ENCODE measurements at regions of chr2 and their contacts with region 1.

Region 1: GRCh38 chr2:96509114-96509846 is 4.1 kb upstream of the NEURL3 start:
- DNase-seq: peak; percentile 82 to 94
- H3K4me3 ChIP-seq: no peak overlapping the region
- H3K27ac ChIP-seq: no peak overlapping the region
- H3K4me1 ChIP-seq: peaks cover 40% of the 10 kb centered on the region
- H3K27me3 ChIP-seq: no peaks in the 10 kb centered on the region
- CTCF ChIP-seq: peak; percentile 100

Region 2: DNA sequence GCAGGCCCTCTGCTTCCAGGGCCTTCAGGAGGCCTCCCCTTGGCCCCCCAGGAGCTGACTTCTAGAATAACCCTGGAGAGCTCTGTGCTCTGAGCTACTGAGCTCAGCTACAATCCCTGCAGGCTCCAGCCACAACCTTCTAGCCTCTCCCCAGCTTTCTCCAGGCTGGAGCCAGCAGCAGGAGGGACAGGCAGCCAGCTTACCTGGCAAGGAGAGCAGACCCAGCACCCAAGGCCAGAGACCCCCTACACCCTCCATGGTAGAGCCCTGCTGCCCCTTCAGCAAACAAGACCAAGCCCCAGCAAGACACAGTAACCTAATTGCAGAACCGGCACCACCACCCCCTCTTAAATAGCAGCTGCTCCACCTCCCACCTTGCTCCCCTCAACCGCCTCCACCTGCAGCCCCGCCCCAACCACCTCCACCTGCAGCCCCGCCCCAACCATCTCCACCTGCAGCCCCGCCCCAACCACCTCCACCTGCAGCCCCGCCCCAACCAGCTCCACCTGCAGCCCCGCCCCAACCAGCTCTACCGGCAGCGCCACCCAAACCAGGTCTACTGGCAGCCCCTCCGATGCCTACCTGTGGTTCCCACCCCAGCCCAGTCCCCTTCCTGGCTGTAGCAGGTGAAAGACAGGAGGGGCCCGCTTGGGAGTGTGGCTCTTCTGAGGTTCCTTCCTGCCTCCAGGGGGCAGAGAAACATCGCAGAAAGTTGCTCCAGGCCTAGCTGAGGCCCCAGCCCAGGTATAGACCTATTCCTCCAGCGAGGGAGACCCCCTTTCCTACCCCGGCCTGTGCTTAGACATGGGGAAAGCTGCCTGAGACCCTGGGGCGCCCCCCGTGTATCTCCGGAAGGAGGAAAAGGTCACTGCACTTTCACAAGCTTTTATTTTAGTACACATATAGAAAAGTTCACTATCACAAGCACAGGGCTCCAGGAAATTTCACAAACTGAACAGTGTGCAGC is 370.8 kb before region 1 on chr2 and contains the start of gene ASTL:
- CTCF ChIA-PET with region 1: no interaction called
- POLR2A ChIA-PET with region 1: no interaction called
- intact Hi-C with region 1: loop called (anchors 2 kb)
- DNase-seq: peak; percentile 80 to 89
- H3K4me3 ChIP-seq: peak within 1 kb of the TSS; percentile 22; the same call in 1 of the 2 replicates
- H3K27ac ChIP-seq: no peak within 1 kb of the TSS
- H3K4me1 ChIP-seq: peaks cover 9% of the 10 kb centered on the region
- H3K27me3 ChIP-seq: no peaks in the 10 kb centered on the region
- CTCF ChIP-seq: peak; percentile 71
- total RNA-seq, gene ASTL: not detected in 2 replicates

Region 3: DNA sequence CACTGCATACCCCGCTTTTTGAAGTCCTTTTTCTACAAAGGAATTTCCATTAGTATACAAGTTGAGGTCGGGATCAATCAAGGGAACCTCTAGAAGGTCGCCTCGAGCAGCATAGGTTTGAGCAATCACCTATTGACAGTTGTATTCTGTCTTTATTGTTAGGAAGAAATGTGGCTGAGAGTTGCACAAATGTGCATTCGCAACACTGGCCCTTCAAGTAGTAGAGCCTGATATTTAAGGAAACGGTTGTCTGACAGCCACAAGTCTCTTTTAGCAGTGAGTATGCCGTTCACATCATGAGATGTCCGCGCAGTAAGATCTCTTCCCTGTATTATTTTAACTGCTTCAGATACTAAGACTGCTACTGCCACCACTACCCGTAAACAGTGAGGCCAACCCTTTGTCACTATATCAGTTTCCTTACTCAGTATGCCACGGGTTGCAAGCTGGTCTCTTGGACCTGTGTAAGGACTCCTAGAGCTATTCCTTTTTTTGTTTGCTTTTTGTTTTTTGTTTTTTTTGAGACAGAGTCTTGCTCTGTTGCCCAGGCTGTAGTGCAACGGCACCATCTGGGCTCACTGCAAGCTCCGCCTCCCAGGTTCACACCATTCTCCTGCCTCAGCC is 290.7 kb before region 1 on chr2:
- CTCF ChIA-PET with region 1: no interaction called
- POLR2A ChIA-PET with region 1: no interaction called
- intact Hi-C with region 1: no loop called
- DNase-seq: no peak
- H3K4me3 ChIP-seq: no peak overlapping the region
- H3K27ac ChIP-seq: no peak overlapping the region
- H3K4me1 ChIP-seq: no peaks in the 10 kb centered on the region
- H3K27me3 ChIP-seq: no peaks in the 10 kb centered on the region
- CTCF ChIP-seq: no peak

Region 4: DNA sequence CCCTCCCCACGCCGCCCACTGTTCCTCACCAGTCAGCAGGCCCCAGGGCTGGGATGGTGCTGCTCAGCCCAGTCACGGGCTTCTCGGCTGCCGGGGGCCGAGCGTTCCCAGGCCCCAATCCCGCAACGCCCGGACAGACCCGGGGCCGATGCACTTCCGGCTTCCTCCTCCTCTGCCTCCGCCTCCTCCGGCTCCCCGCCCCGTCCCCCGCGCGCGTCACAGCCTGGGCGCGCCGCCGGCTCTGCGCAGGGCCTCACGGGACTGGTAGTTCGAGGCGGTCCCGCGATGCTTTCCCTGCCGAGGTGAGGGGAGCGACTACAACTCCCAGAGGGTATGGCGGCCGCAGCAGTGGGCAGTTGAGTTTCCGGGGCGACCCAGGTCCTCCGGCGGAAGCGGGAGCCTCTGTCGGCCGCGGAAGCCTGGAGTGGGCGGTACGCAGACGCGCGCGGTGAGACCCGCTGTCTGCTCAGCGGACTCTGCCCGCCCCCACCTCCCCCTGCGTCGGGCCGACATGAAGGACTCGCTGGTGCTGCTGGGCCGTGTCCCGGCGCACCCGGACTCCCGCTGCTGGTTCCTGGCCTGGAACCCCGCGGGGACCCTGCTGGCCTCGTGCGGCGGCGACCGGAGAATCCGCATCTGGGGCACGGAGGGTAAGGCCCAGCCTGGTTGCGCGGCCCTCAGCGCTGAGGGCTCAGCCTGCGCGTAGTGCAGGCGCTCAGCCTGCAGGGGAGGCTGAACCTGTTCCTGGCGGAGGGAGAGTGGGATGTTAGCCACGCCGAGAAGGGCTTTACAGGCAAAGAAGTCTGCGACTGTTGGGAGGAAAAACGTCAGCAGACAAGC is 243.2 kb before region 1 on chr2 and contains the starts of genes CIAO1 and TMEM127:
- CTCF ChIA-PET with region 1: no interaction called
- POLR2A ChIA-PET with region 1: no interaction called
- intact Hi-C with region 1: loop called (anchors 2 kb)
- DNase-seq: peak; percentile 96 to 99
- H3K4me3 ChIP-seq: peak within 1 kb of the TSS; percentile 92
- H3K27ac ChIP-seq: peak within 1 kb of the TSS; percentile 48
- H3K4me1 ChIP-seq: peaks cover 41% of the 10 kb centered on the region
- H3K27me3 ChIP-seq: no peaks in the 10 kb centered on the region
- CTCF ChIP-seq: peak; percentile 52; the same call in 1 of the 2 replicates
- total RNA-seq, gene CIAO1: 85.3 and 99.5 TPM in 2 replicates
- total RNA-seq, gene TMEM127: 38.4 and 50.3 TPM in 2 replicates

Region 5: GRCh38 chr2:96296925-96297324 is 212.4 kb before region 1 on chr2:
- CTCF ChIA-PET with region 1: no interaction called
- POLR2A ChIA-PET with region 1: no interaction called
- intact Hi-C with region 1: no loop called
- DNase-seq: no peak
- H3K4me3 ChIP-seq: no peak overlapping the region
- H3K27ac ChIP-seq: no peak overlapping the region
- H3K4me1 ChIP-seq: no peaks in the 10 kb centered on the region
- H3K27me3 ChIP-seq: no peaks in the 10 kb centered on the region
- CTCF ChIP-seq: no peak

Region 6: DNA sequence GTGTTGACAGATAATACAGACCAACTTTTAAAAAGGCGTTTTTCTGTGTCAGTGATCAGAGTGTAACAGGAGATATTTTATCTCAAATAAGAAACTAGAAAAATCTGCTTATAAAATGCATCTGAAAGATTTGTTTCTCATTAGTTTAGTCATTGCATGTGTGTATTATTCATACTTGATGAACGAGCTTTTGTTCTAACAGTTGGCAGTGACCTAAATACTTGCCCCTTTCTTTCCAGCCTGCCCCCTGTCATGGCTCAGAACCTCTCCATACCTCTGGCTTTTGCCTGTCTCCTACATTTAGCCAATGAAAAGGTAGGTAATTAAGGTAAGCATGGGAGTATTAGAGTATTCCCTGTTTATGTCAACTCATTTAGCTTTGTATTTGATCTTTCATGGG is 140.1 kb before region 1 on chr2:
- CTCF ChIA-PET with region 1: no interaction called
- POLR2A ChIA-PET with region 1: interaction called, 16 read pairs
- intact Hi-C with region 1: no loop called
- DNase-seq: no peak
- H3K4me3 ChIP-seq: no peak overlapping the region
- H3K27ac ChIP-seq: no peak overlapping the region
- H3K4me1 ChIP-seq: peaks cover 6% of the 10 kb centered on the region
- H3K27me3 ChIP-seq: no peaks in the 10 kb centered on the region
- CTCF ChIP-seq: no peak

Region 7: DNA sequence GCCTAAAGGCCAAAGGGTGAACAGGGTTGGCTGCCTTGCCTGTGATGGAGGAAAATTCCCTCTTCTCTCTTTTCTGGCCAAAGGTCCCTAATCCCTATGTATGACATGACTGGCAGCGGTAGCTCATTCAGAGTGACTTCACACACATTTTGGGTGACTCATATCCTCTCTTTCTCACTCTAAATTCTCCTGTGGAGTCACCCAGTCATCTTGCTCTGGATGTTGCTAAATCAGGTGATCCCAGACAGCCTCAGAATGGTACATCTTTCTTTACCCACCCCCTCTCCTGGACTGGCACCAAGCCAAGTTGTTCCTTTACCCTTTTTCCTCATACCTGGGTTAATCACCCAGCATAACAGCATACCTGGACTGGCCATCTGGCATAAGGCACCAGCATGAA is 81.4 kb before region 1 on chr2:
- CTCF ChIA-PET with region 1: interaction called, 5 read pairs
- POLR2A ChIA-PET with region 1: interaction called, 8 read pairs
- intact Hi-C with region 1: loop called (anchors 1 kb)
- DNase-seq: peak; percentile 96 to 100
- H3K4me3 ChIP-seq: no peak overlapping the region
- H3K27ac ChIP-seq: peak overlapping the region; percentile 82
- H3K4me1 ChIP-seq: peaks cover 32% of the 10 kb centered on the region
- H3K27me3 ChIP-seq: no peaks in the 10 kb centered on the region
- CTCF ChIP-seq: no peak

Region 8: GRCh38 chr2:96554293-96555145 is 45.2 kb after region 1 on chr2:
- CTCF ChIA-PET with region 1: no interaction called
- POLR2A ChIA-PET with region 1: no interaction called
- intact Hi-C with region 1: loop called (anchors 1 kb)
- DNase-seq: peak; percentile 55 to 67
- H3K4me3 ChIP-seq: no peak overlapping the region
- H3K27ac ChIP-seq: no peak overlapping the region
- H3K4me1 ChIP-seq: peaks cover 30% of the 10 kb centered on the region
- H3K27me3 ChIP-seq: no peaks in the 10 kb centered on the region
- CTCF ChIP-seq: peak; percentile 99

Measured in PC-9 (cell line).